ENCODE measurements at regions of chr10 and their contacts with region 1.

Region 1: GRCh38 chr10:68606918-68607317 is 46.8 kb downstream of the TET1 start:
- DNase-seq: no peak
- ATAC-seq: no peak
- H3K4me3 Mint-ChIP-seq: no peak overlapping the region
- H3K27ac Mint-ChIP-seq: no peak overlapping the region
- H3K4me1 Mint-ChIP-seq: peaks cover 6% of the 10 kb centered on the region
- H3K27me3 Mint-ChIP-seq: no peaks in the 10 kb centered on the region
- CTCF ChIP-seq: no peak

Region 2: DNA sequence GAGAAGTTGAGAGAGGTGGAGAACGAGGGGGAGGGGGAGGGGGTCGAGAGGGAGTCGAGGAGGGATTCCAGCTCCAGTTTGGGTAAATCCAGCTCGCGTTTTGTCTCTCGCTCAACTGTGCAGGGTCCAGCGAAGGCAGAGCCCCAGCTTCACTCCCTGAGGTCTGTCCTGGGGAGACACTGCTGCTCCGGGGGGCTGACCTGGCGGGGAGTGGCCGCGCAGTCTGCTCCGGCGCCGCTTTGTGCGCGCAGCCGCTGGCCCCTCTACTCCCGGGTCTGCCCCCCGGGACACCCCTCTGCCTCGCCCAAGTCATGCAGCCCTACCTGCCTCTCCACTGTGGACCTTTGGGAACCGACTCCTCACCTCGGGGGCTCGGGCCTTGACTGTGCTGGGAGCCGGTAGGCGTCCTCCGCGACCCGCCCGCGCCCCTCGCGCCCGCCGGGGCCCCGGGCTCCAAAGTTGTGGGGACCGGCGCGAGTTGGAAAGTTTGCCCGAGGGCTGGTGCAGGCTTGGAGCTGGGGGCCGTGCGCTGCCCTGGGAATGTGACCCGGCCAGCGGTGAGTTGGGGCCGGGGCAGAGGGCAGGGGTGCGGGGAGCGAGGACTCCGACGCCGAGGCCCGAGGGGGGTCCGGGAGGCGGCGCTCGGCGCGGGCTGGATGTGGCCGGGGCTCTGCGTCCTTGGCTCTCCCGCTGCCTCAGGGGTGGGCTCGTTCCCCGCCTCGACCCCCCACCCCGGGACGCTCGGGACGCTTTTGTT is 46.6 kb before region 1 on chr10 and contains the start of gene TET1:
- CTCF ChIA-PET with region 1: no interaction called
- POLR2A ChIA-PET with region 1: no interaction called
- intact Hi-C with region 1: no loop called
- DNase-seq: peak; percentile 24
- ATAC-seq: peak; percentile 47
- H3K4me3 Mint-ChIP-seq: peak within 1 kb of the TSS; percentile 78
- H3K27ac Mint-ChIP-seq: no peak within 1 kb of the TSS
- H3K4me1 Mint-ChIP-seq: peaks cover 30% of the 10 kb centered on the region
- H3K27me3 Mint-ChIP-seq: peaks cover 58% of the 10 kb centered on the region
- CTCF ChIP-seq: no peak
- total RNA-seq, gene TET1: 0.54 and 0.69 TPM in 2 replicates

Region 3: DNA sequence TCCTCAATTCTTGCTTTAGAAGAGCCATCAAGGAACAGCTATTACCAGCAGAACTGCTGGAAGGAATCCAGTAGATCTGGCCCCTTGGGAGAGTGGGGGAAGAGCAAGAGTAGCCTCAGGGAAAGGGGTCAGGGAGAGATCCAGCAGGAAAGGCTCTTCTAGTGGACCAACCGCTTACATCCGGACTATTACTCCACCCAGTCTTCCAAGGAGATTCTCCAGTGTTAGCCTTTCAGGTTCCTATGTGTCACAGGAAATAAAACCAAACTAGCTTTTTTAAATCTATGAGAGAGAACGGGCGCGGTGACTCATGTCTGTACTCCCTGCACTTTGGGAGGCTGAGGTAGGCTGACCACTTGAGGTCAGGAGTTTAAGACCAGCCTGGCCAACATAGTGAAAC is 12.5 kb before region 1 on chr10:
- CTCF ChIA-PET with region 1: no interaction called
- POLR2A ChIA-PET with region 1: no interaction called
- intact Hi-C with region 1: loop called (anchors 2 kb)
- DNase-seq: no peak
- ATAC-seq: no peak
- H3K4me3 Mint-ChIP-seq: no peak overlapping the region
- H3K27ac Mint-ChIP-seq: no peak overlapping the region
- H3K4me1 Mint-ChIP-seq: no peaks in the 10 kb centered on the region
- H3K27me3 Mint-ChIP-seq: no peaks in the 10 kb centered on the region
- CTCF ChIP-seq: no peak